ENCODE measurements at regions of chr15 and their contacts with region 1.

Region 1: GRCh38 chr15:63752075-63752684 is 81.6 kb downstream of the HERC1 start:
- DNase-seq: peak; percentile 44 to 66 (median 56)
- H3K4me3 ChIP-seq: no peak overlapping the region
- H3K4me3 Mint-ChIP-seq: no peak overlapping the region
- H3K27ac ChIP-seq: no peak overlapping the region
- H3K27ac Mint-ChIP-seq: peak overlapping the region in 4 of 7 donors; percentile 4 to 80 (median 56)
- H3K4me1 ChIP-seq: no peaks in the 10 kb centered on the region
- H3K4me1 Mint-ChIP-seq: peaks cover 0 to 3% (median 0%) of the 10 kb centered on the region in 4 donors
- H3K27me3 ChIP-seq: no peaks in the 10 kb centered on the region
- H3K27me3 Mint-ChIP-seq: no peaks in the 10 kb centered on the region

Region 2: GRCh38 chr15:63610200-63610841 is 141.9 kb before region 1 on chr15:
- CTCF ChIA-PET with region 1: interaction called, 12 read pairs
- POLR2A ChIA-PET with region 1: no interaction called
- intact Hi-C with region 1: loop called (anchors 1 kb)
- DNase-seq: peak; percentile 68 to 85 (median 75)
- H3K4me3 ChIP-seq: no peak overlapping the region
- H3K4me3 Mint-ChIP-seq: peak overlapping the region; percentile 3 to 60 (median 34)
- H3K27ac ChIP-seq: peak overlapping the region; percentile 33
- H3K27ac Mint-ChIP-seq: peak overlapping the region; percentile 27 to 97 (median 93)
- H3K4me1 ChIP-seq: peaks cover 33% of the 10 kb centered on the region
- H3K4me1 Mint-ChIP-seq: peaks cover 27 to 47% (median 39%) of the 10 kb centered on the region in 4 donors
- H3K27me3 ChIP-seq: no peaks in the 10 kb centered on the region
- H3K27me3 Mint-ChIP-seq: no peaks in the 10 kb centered on the region

Region 3: DNA sequence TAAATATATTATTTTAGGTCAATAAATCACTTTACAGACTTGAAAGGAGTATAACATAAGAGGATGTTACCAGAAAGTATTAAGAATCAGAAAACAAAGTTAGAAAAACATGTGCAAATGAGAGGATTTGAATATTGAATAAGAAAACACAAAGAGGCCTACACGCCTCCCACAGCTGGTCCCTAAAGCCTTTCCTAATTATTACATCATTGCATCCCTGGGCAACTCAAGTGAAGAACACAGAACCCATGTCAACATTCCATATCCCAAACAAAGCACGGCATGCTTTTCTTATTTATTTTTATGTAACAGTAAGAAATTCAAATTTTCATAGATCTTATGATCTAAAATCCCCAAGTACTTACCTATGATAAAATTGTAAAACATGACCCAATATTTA is 20.3 kb after region 1 on chr15:
- CTCF ChIA-PET with region 1: interaction called, 12 read pairs
- POLR2A ChIA-PET with region 1: no interaction called
- intact Hi-C with region 1: no loop called
- DNase-seq: no peak
- H3K4me3 ChIP-seq: no peak overlapping the region
- H3K4me3 Mint-ChIP-seq: no peak overlapping the region
- H3K27ac ChIP-seq: no peak overlapping the region
- H3K27ac Mint-ChIP-seq: peak overlapping the region in 1 of 7 donors; percentile 1
- H3K4me1 ChIP-seq: peaks cover 5% of the 10 kb centered on the region
- H3K4me1 Mint-ChIP-seq: peaks cover 20 to 50% (median 46%) of the 10 kb centered on the region in 4 donors
- H3K27me3 ChIP-seq: no peaks in the 10 kb centered on the region
- H3K27me3 Mint-ChIP-seq: no peaks in the 10 kb centered on the region

Region 4: DNA sequence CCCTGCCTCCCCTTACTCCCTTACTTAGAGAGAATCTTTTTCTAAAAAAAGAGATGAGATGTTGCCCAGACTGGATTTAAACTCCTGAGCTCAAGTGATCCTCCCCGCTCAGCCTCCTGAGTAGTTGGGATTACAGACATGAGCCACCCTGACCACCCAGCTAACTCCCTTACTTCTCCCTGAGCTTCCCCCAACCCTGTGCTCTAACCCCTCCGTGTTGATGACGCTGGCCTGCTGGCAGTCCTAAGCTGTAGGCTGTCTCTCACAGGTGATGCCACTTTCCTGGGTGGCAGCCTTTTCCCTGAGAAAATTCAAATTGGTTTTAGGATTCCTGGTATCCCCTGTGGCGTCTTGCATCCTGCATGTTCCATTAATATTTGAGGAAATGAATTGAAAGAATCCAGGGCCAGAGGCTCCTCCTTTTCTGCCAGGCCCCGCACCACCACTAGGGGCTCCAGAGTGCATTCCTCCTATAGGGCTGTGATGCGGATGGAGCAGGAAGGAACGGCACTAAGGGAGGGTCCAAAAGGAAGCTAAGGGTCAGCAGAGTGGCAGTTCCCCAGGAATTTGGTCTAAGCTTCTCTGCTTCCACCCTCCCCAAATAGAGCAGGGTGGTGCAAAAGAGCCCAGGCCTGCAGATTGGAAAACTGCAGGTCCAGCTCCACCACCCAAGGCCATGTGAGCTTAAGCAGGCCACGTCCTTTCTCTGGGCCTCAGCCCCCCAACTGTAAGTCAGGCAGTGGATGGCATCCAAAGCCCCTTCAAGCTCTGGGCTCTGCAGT is 193.0 kb after region 1 on chr15:
- CTCF ChIA-PET with region 1: interaction called, 12 read pairs
- POLR2A ChIA-PET with region 1: interaction called, 4 read pairs
- intact Hi-C with region 1: no loop called
- DNase-seq: peak; percentile 50 to 66 (median 56)
- H3K4me3 ChIP-seq: no peak overlapping the region
- H3K4me3 Mint-ChIP-seq: peak overlapping the region in 3 of 8 donors; percentile 4 to 57 (median 14)
- H3K27ac ChIP-seq: no peak overlapping the region
- H3K27ac Mint-ChIP-seq: peak overlapping the region in 5 of 7 donors; percentile 30 to 85 (median 61)
- H3K4me1 ChIP-seq: peaks cover 9% of the 10 kb centered on the region
- H3K4me1 Mint-ChIP-seq: peaks cover 6 to 20% (median 10%) of the 10 kb centered on the region in 4 donors
- H3K27me3 ChIP-seq: no peaks in the 10 kb centered on the region
- H3K27me3 Mint-ChIP-seq: no peaks in the 10 kb centered on the region

Region 5: GRCh38 chr15:64051407-64052249 is 299.4 kb after region 1 on chr15:
- CTCF ChIA-PET with region 1: interaction called, 91 read pairs
- POLR2A ChIA-PET with region 1: interaction called, 11 read pairs
- intact Hi-C with region 1: loop called (anchors 1 kb)
- DNase-seq: no peak
- H3K4me3 ChIP-seq: no peak overlapping the region
- H3K4me3 Mint-ChIP-seq: no peak overlapping the region
- H3K27ac ChIP-seq: no peak overlapping the region
- H3K27ac Mint-ChIP-seq: peak overlapping the region in 1 of 7 donors; percentile 11
- H3K4me1 ChIP-seq: peaks cover 4% of the 10 kb centered on the region
- H3K4me1 Mint-ChIP-seq: peaks cover 3 to 4% (median 3%) of the 10 kb centered on the region in 4 donors
- H3K27me3 ChIP-seq: no peaks in the 10 kb centered on the region
- H3K27me3 Mint-ChIP-seq: peaks cover 4 to 8% of the 10 kb centered on the region in 2 donors

Region 6: GRCh38 chr15:64093627-64094417 is 341.6 kb after region 1 on chr15 and contains the start of gene CIAO2A:
- CTCF ChIA-PET with region 1: interaction called, 11 read pairs
- POLR2A ChIA-PET with region 1: no interaction called
- intact Hi-C with region 1: loop called (anchors 1 kb)
- DNase-seq: peak; percentile 86 to 96 (median 90)
- H3K4me3 ChIP-seq: peak within 1 kb of the TSS; percentile 87 to 98
- H3K4me3 Mint-ChIP-seq: peak within 1 kb of the TSS; percentile 92 to 99 (median 98)
- H3K27ac ChIP-seq: peak within 1 kb of the TSS; percentile 85
- H3K27ac Mint-ChIP-seq: peak within 1 kb of the TSS; percentile 90 to 100 (median 98)
- H3K4me1 ChIP-seq: peaks cover 65% of the 10 kb centered on the region
- H3K4me1 Mint-ChIP-seq: peaks cover 55 to 86% (median 69%) of the 10 kb centered on the region in 4 donors
- H3K27me3 ChIP-seq: no peaks in the 10 kb centered on the region
- H3K27me3 Mint-ChIP-seq: no peaks in the 10 kb centered on the region
- total RNA-seq, gene CIAO2A: 35.0 to 36.4 TPM